GM13976 (cell line): ENCODE measurements at regions of chr17 and their contacts with region 1.

Region 1: DNA sequence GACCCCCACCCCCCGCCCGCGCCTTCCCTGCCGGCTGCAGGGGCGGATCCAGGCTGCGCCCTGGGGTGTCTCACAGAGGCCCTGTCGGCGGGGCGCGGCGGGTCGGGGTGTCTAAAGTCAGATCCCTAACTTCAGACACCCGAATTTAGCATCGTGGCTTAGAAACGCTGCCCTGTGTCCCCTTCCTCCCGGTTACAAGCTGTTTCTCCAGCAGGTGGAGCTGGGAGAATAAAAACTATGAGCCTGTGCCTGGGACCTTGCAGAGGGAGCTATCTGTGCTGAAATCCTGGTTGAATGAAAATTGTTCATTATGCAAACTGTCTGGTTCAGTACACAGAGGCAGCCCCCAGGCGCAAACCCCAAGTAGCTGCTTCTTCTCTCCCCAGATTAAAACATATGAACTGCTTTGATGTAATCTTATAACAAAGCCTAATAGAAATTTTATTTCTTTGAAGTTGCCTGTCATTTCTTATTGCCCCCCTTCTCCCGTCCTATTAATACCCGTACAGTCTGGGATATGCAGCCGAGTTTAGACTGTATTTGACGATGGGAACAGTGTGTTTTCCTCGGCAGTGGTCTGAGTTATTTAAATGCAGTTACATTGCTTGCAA is 79.0 kb downstream of the RPA1 start:
- DNase-seq: peak; percentile 78
- CTCF ChIP-seq: peak; percentile 40

Region 2: GRCh38 chr17:1967213-1967612 is 58.4 kb after region 1 on chr17:
- in situ Hi-C with region 1: no loop called
- DNase-seq: no peak
- CTCF ChIP-seq: no peak

Region 3: GRCh38 chr17:2029911-2030778 is 121.3 kb after region 1 on chr17 and contains the start of gene DPH1:
- in situ Hi-C with region 1: loop called (anchors 10 kb)
- DNase-seq: peak; percentile 93
- CTCF ChIP-seq: no peak

Region 4: DNA sequence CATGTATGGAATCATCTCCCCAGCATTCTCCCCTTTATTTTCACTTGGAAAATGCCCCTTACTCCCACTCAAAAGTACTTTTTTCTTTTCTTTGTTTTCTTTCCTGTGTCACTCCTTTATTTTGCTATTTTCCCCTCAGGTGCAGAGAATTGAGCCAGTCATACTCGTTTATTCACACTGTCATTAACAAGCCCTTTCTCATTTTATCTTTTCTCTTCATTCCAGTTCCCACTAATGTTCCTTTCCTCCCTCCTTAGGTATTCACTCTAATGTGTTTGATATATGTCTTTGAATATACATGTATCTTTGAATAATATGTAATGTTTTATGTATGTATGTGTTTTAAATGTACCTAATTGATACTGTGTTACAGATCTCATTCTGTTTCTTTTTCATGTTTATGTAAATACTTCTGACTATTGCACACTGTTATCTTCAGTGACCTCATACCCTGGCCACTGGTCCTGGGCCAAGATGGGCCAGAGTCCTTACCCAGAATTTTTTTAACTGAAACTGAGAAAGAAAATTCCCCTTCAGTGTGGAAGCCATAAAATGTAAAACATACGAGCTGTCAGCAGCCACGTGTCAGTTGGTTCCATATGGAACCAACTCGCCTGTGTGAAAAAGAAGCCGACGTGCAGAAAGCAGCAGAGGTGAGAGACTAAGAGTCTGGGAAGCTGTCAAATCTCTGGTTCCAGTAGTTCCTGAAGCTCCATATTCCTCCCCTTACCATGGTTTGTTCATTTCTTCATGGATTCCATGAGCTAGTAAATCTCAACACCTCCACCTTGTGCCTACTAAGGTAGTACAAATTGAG is 400.7 kb after region 1 on chr17:
- in situ Hi-C with region 1: no loop called
- DNase-seq: no peak
- CTCF ChIP-seq: no peak